WTC11 (cell line): ENCODE measurements at regions of chr3 and their contacts with region 1.

Region 1: GRCh38 chr3:37855363-37855970 is 6.2 kb upstream of the CTDSPL start:
- DNase-seq: peak; percentile 89
- ATAC-seq: peak; percentile 41
- H3K4me3 Mint-ChIP-seq: no peak overlapping the region
- H3K27ac Mint-ChIP-seq: no peak overlapping the region
- H3K4me1 Mint-ChIP-seq: peaks cover 19% of the 10 kb centered on the region
- H3K27me3 Mint-ChIP-seq: peaks cover 19% of the 10 kb centered on the region
- CTCF ChIP-seq: peak; percentile 95

Region 2: DNA sequence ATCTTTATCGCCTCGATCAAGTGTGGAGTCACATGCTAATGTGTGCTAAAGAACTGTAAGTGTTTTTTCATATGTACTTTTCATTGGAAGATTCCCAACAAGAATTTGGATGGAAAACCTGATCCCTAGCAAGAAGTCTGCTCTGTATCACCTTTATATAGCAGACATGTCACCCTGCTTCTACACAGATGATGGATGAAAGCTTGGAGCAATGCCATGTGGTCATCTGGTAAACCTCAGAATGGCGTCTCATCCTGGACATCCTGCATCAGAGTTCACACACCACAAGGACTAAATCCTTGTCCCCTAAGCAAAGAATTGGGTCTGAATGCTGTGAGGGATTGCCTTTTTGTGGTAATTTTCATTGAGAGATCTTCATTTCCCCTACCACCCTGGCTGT is 35.9 kb before region 1 on chr3:
- CTCF ChIA-PET with region 1: no interaction called
- POLR2A ChIA-PET with region 1: no interaction called
- DNase-seq: no peak
- ATAC-seq: no peak
- H3K4me3 Mint-ChIP-seq: no peak overlapping the region
- H3K27ac Mint-ChIP-seq: no peak overlapping the region
- H3K4me1 Mint-ChIP-seq: peaks cover 9% of the 10 kb centered on the region
- H3K27me3 Mint-ChIP-seq: no peaks in the 10 kb centered on the region
- CTCF ChIP-seq: no peak

Region 3: DNA sequence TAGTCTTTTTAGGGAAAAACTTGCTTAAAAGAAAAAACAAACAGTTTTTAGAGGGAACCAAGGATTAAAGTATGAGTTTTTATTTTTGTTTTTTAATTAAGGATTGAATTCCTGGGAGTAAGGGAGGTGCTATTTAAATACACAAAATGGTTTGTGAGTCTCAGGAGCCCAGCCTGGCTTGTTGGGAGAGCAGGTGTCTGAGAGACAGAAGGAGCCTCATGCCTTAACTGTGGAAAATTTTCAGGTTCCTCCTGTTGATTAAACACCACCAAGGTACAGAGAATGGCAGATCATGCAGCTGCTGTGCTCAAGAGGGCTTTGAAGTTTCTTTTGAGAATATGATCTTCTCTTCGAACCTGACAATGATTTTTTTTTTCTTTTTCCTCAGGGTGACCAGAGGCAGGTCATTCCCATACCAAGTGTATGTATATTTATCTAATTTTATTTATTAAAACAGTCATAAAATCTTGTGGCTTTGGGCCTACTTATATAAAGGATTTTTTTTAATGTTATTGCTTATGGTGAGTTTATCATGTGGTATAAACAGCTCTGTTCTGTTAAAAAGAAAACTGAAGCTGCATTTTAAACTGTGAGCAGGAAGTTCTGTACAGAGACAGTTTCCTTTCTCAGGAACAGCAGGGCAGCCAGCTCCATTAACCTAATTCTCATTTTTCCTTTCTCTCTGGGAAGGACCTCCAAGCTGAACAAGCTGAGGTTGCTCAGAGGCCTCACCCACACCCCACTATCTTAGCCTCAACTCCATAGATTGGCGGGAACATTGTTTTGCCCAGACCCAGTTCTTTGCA is 101.5 kb after region 1 on chr3:
- CTCF ChIA-PET with region 1: interaction called, 22 read pairs
- POLR2A ChIA-PET with region 1: no interaction called
- DNase-seq: no peak
- ATAC-seq: no peak
- H3K4me3 Mint-ChIP-seq: no peak overlapping the region
- H3K27ac Mint-ChIP-seq: peak overlapping the region; percentile 86
- H3K4me1 Mint-ChIP-seq: peaks cover 30% of the 10 kb centered on the region
- H3K27me3 Mint-ChIP-seq: no peaks in the 10 kb centered on the region
- CTCF ChIP-seq: no peak

Region 4: DNA sequence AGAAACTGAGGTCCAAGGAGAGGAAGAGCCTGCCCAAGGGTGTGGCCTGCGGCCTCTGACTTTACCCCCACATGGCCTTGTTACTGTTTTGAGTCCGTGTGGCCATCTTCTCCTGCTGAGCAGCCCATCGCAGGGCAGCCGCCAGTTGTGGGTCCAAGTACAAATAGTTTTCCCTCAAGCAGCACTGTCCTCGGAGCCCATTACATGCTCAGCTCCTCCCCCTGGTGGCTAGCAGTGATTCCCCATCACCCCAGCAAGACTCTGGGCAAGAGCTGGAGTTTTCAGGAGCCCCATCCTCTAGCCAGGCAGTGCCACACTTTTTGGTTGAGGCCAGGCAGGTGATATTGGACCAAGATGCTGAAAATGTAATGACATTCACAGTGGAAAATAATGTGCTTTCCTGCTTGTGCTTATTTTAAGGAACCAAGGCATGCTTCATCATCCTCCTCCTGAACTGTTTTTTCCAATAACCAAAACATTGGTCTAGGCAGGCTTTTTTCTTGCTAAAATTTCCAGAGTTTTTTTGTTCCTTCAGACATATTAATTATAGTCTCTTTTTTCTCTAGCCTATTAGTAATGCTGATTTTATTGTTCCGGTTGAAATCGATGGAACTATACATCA is 111.9 kb after region 1 on chr3:
- CTCF ChIA-PET with region 1: interaction called, 109 read pairs
- POLR2A ChIA-PET with region 1: no interaction called
- DNase-seq: peak; percentile 85
- ATAC-seq: peak; percentile 96
- H3K4me3 Mint-ChIP-seq: no peak overlapping the region
- H3K27ac Mint-ChIP-seq: no peak overlapping the region
- H3K4me1 Mint-ChIP-seq: peaks cover 31% of the 10 kb centered on the region
- H3K27me3 Mint-ChIP-seq: no peaks in the 10 kb centered on the region
- CTCF ChIP-seq: peak; percentile 77

Region 5: DNA sequence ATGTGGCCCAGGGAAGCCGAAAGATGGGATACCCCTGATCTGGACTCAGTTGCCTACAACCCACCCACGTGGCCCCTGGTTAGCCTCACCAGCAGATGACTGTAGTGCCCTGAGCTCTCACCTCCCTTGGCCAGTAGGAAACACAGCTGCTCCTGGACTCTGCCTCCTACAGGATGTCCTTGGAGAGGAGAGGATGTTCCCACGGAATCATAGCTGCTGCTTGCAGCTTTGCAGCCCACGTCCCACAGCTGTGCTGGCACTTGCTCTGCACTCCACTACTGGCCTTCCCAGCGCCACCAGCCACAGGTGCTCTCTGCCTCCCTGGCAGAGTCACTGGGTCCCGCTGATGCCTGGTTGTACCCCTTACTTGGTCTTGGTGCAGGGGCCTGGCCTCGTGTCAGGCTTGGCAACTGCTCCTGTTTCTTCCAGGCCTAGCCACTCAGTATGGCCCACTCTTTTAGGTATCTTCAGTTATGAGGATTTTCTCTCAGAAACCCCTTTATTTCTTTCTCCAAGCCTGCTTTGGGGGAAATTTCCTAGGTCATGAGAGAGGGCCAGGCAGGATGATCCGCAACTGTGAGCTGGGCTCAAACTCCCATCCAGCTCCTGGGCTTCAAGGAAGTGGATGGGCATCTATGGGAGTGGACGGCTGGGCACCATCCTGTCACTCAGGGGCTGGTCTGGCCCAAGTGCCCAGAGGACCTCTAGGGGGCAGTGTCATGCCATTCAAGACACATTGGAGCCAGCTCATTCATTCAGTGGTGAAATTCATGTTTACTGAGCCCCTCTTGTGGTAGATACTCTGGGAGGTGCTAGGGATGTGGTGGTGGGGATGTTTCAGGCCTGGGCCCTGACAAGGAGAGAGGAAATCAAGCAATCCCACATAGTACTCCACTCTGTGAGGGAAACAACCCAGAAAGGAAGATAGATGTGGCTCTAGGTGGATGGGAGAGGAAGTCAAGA is 118.9 kb after region 1 on chr3:
- CTCF ChIA-PET with region 1: interaction called, 109 read pairs
- POLR2A ChIA-PET with region 1: no interaction called
- DNase-seq: peak; percentile 77
- ATAC-seq: peak; percentile 95
- H3K4me3 Mint-ChIP-seq: no peak overlapping the region
- H3K27ac Mint-ChIP-seq: peak overlapping the region; percentile 3; the same call in 1 of the 2 replicates
- H3K4me1 Mint-ChIP-seq: peaks cover 13% of the 10 kb centered on the region
- H3K27me3 Mint-ChIP-seq: peaks cover 2% of the 10 kb centered on the region; the same call in 1 of the 2 replicates
- CTCF ChIP-seq: peak; percentile 78

Region 6: GRCh38 chr3:37986479-37987314 is 131.2 kb after region 1 on chr3:
- CTCF ChIA-PET with region 1: interaction called, 23 read pairs
- POLR2A ChIA-PET with region 1: no interaction called
- DNase-seq: no peak
- ATAC-seq: peak; percentile 26
- H3K4me3 Mint-ChIP-seq: no peak overlapping the region
- H3K27ac Mint-ChIP-seq: no peak overlapping the region
- H3K4me1 Mint-ChIP-seq: peaks cover 13% of the 10 kb centered on the region
- H3K27me3 Mint-ChIP-seq: no peaks in the 10 kb centered on the region; the same call in 1 of the 2 replicates
- CTCF ChIP-seq: no peak

Region 7: GRCh38 chr3:38004415-38005076 is 149.1 kb after region 1 on chr3:
- CTCF ChIA-PET with region 1: interaction called, 16 read pairs
- POLR2A ChIA-PET with region 1: no interaction called
- DNase-seq: peak; percentile 72
- ATAC-seq: peak; percentile 58
- H3K4me3 Mint-ChIP-seq: no peak overlapping the region
- H3K27ac Mint-ChIP-seq: peak overlapping the region; percentile 76; the same call in 1 of the 2 replicates
- H3K4me1 Mint-ChIP-seq: peaks cover 5% of the 10 kb centered on the region
- H3K27me3 Mint-ChIP-seq: no peaks in the 10 kb centered on the region
- CTCF ChIP-seq: no peak